ENCODE measurements at regions of chr19 and their contacts with region 1.

Region 1: GRCh38 chr19:52527134-52527955 is at the start of gene ZNF808:
- DNase-seq: peak; percentile 94
- H3K4me3 ChIP-seq: peak within 1 kb of the TSS; percentile 54 to 64
- H3K27ac ChIP-seq: peak within 1 kb of the TSS; percentile 84
- H3K4me1 ChIP-seq: no peaks in the 10 kb centered on the region
- H3K27me3 ChIP-seq: no peaks in the 10 kb centered on the region
- CTCF ChIP-seq: peak in 3 of 4 experiments; percentile 42 to 78 (median 74)
- POLR2A ChIP-seq: peak; percentile 35
- total RNA-seq, gene ZNF808: 14.5 to 21.7 TPM

Region 2: GRCh38 chr19:52734893-52735661 is 207.7 kb after region 1 on chr19 and contains the start of gene ZNF611:
- intact Hi-C with region 1: loop called (anchors 10 kb)
- DNase-seq: peak; percentile 98
- H3K4me3 ChIP-seq: peak within 1 kb of the TSS; percentile 55 to 82
- H3K27ac ChIP-seq: peak within 1 kb of the TSS; percentile 79 to 91
- H3K4me1 ChIP-seq: no peaks in the 10 kb centered on the region
- H3K27me3 ChIP-seq: no peaks in the 10 kb centered on the region
- CTCF ChIP-seq: peak in 3 of 4 experiments; percentile 54 to 91 (median 89)
- POLR2A ChIP-seq: peak; percentile 94
- total RNA-seq, gene ZNF611: 12.0 to 15.3 TPM